Activated CD4-positive, alpha-beta memory T cell treated with anti-CD3 and anti-CD28 coated beads for 36 hours (primary cell): ENCODE measurements at regions of chr19 and their contacts with region 1.

Region 1: GRCh38 chr19:45692187-45693105 is at the start of gene QPCTL:
- DNase-seq: peak; percentile 99
- H3K4me3 Mint-ChIP-seq: peak within 1 kb of the TSS; percentile 97
- H3K27ac Mint-ChIP-seq: peak within 1 kb of the TSS; percentile 94
- H3K4me1 Mint-ChIP-seq: peaks cover 21% of the 10 kb centered on the region
- H3K27me3 Mint-ChIP-seq: no peaks in the 10 kb centered on the region
- total RNA-seq, gene QPCTL: 13.8 to 16.8 TPM

Region 2: DNA sequence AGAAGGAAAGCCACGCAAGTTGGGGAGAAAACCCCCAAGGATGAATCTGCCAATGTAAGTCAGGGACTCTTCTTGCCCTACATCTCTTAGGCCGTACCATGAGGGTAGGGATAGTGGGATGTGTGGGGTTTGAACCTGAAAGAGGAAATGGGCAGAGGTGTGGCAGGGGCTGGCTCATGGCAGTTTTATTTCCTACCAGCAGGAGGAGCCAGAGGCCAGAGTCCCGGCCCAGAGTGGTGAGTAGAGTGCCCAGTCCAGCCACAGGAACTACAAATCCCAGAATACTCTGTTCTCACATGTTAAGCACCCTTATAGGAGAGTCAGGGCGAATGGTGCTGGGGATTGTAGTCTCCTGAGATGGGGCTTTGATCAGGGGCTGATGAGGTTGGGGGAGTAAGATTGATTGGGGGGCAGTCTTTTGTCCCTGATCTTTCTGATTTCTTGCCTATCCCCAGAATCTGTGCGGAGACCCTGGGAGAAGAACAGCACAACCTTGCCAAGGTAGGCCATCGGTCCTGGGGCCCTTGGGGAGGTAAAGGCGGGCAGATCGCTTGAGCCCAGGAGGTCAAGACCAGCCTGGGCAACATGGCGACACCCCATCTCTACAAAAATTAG is 168.7 kb before region 1 on chr19:
- CTCF ChIA-PET with region 1: no interaction called
- POLR2A ChIA-PET with region 1: no interaction called
- intact Hi-C with region 1: loop called (anchors 5 kb)
- DNase-seq: peak; percentile 84
- H3K4me3 Mint-ChIP-seq: no peak overlapping the region
- H3K27ac Mint-ChIP-seq: peak overlapping the region; percentile 70
- H3K4me1 Mint-ChIP-seq: peaks cover 18% of the 10 kb centered on the region
- H3K27me3 Mint-ChIP-seq: peaks cover under 1% of the 10 kb centered on the region

Region 3: DNA sequence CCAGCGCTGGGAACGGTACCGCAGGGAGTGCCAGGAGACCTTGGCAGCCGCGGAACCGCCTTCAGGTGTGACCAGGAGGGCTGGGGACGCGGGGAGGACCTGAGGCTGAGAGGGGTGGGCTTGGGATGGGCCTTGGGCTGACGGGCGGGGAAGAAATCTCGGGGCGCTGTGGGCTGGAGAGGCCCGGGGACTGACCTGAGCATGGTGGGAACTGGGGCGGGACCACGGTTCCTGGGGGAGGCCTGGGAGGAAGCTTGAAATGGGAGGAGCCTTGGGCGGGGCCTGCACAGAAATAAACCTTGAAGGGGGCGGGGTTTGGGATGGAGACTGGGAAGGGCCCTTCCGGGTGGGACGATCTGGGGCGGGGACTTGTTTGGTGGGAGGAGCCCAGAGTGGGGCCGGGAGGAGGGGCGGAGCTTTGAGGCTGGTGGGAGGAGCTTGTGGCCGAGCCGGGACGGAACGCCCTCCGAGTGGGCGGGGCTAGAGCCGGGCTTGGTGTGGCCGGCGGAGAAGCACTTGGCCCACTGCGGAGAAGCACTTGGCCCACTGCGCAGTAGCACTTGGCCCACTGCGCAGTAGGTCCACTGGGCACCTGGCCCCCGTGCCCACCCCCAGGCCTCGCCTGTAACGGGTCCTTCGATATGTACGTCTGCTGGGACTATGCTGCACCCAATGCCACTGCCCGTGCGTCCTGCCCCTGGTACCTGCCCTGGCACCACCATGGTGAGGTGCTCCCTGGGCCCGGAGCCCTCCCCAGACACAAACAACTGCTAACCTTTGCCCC is 21.6 kb before region 1 on chr19:
- CTCF ChIA-PET with region 1: interaction called, 77 read pairs
- POLR2A ChIA-PET with region 1: interaction called, 4 read pairs
- intact Hi-C with region 1: loop called (anchors 1 kb)
- DNase-seq: peak; percentile 83
- H3K4me3 Mint-ChIP-seq: peak overlapping the region; percentile 57
- H3K27ac Mint-ChIP-seq: no peak overlapping the region
- H3K4me1 Mint-ChIP-seq: peaks cover 33% of the 10 kb centered on the region
- H3K27me3 Mint-ChIP-seq: peaks cover 17% of the 10 kb centered on the region

Region 4: GRCh38 chr19:45711851-45712698 is 19.6 kb after region 1 on chr19:
- CTCF ChIA-PET with region 1: interaction called, 68 read pairs
- POLR2A ChIA-PET with region 1: interaction called, 31 read pairs
- intact Hi-C with region 1: loop called (anchors 1 kb)
- DNase-seq: no peak
- H3K4me3 Mint-ChIP-seq: no peak overlapping the region
- H3K27ac Mint-ChIP-seq: no peak overlapping the region
- H3K4me1 Mint-ChIP-seq: peaks cover 21% of the 10 kb centered on the region
- H3K27me3 Mint-ChIP-seq: no peaks in the 10 kb centered on the region

Region 5: GRCh38 chr19:45770192-45771101 is 78.0 kb after region 1 on chr19:
- CTCF ChIA-PET with region 1: interaction called, 15 read pairs
- POLR2A ChIA-PET with region 1: interaction called, 4 read pairs
- intact Hi-C with region 1: no loop called
- DNase-seq: peak; percentile 92
- H3K4me3 Mint-ChIP-seq: peak overlapping the region; percentile 78
- H3K27ac Mint-ChIP-seq: peak overlapping the region; percentile 28
- H3K4me1 Mint-ChIP-seq: peaks cover 10% of the 10 kb centered on the region
- H3K27me3 Mint-ChIP-seq: peaks cover 9% of the 10 kb centered on the region

Region 6: DNA sequence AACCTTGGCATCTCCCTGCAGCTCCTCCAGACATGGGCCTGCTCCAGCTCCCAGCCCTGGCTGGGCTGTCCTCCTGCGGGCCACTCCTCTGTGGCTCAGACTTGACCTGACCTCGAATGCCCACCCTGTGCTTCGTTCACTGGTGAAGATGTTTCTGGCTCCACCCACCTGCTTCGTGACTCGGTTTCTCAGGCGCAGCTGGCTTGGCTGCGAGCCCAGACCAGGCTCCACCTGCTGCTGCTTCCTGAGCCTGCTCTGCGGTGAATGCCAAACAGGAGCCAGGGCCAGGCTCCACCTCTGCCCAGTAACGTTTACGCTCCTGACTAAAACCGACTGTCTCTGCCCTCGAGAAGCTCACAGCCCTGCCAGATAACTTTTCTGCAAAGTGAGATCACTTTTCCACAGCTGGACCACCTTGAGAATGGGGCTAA is 131.6 kb after region 1 on chr19:
- CTCF ChIA-PET with region 1: no interaction called
- POLR2A ChIA-PET with region 1: no interaction called
- intact Hi-C with region 1: no loop called
- DNase-seq: no peak
- H3K4me3 Mint-ChIP-seq: no peak overlapping the region
- H3K27ac Mint-ChIP-seq: no peak overlapping the region
- H3K4me1 Mint-ChIP-seq: no peaks in the 10 kb centered on the region
- H3K27me3 Mint-ChIP-seq: no peaks in the 10 kb centered on the region